Activated CD4-positive, alpha-beta T cell treated with anti-CD3 and anti-CD28 coated beads for 36 hours (primary cell): ENCODE measurements at regions of chr11 and their contacts with region 1.

Region 1: GRCh38 chr11:81787584-81788049 is 946.0 kb downstream of the FAM181B start:
- DNase-seq: peak; percentile 13
- ATAC-seq: peak; percentile 94
- H3K4me3 Mint-ChIP-seq: no peak overlapping the region
- H3K27ac Mint-ChIP-seq: no peak overlapping the region
- H3K4me1 Mint-ChIP-seq: peaks cover 19% of the 10 kb centered on the region
- H3K27me3 Mint-ChIP-seq: no peaks in the 10 kb centered on the region

Region 2: DNA sequence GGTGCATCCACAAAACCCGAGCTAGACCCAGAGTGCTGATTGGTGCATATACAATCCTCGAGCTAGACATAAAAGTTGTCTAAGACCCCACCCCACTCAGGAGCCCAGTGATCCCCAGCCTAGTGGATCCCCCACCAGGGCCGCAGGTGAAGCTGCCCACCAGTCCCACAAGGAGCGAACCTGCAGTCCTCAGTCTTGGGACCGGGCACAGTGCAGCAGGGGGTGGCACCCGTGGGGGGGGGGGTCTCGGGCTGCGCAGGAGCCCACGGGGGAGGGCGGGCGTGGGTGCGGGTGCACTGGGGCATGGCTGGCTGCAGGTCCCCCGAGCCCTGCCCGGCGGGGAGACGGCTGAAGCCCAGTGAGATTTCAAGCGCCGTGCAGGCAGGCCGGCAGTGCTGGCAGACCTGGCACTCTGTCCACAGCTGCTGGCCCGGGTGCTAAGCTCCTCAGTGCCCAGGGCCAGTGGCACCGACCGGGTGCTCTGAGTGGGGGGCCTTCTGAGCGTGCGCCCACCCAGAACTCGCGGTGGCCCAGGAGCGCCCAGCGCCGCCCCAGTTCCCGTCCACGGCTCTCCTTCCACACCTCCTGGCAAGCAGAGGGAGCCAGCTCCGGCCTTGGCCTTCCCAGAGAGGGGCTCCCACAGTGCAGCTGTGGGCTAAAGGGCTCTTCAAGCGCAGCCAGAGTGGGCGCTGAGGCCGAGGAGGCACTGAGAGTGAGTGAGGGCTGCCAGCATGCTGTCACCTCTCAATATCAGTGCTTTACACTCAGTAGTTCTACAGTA is 43.1 kb before region 1 on chr11:
- CTCF ChIA-PET with region 1: no interaction called
- POLR2A ChIA-PET with region 1: no interaction called
- intact Hi-C with region 1: no loop called
- DNase-seq: no peak
- ATAC-seq: no peak
- H3K4me3 Mint-ChIP-seq: no peak overlapping the region
- H3K27ac Mint-ChIP-seq: no peak overlapping the region
- H3K4me1 Mint-ChIP-seq: peaks cover 2% of the 10 kb centered on the region
- H3K27me3 Mint-ChIP-seq: peaks cover 1% of the 10 kb centered on the region

Region 3: DNA sequence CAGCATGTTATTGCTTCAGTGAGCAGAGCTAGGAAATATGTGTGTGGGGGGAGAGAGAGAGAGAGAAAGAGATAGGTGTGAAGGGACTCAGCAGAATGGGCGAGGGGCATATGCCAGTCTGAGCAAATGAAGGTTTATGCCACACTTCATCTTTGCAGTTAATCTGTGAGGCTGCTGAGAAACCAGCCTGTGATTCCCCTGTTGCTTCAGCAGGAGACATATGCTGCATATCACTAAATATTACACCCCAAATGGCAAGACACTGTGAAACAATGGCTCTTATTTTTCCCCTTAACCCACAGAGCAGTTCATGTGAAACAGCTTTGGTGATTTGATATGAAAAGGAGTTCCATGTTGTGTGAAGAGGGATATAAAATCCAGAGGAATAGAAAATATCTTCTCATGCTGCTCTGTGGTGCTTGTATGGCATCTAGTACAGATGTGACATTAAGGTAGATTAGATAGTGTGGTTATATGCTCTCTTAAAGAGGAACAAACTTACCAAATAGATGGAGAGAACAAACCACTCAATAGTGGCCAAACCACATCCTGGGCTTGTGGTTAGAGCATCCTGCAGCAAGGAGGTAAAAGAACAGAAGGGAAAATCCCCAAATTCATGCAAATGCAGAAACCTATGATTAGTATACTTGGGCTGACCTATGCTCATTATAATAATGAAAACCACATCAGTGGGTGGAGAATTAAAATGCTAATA is 81.9 kb after region 1 on chr11:
- CTCF ChIA-PET with region 1: no interaction called
- POLR2A ChIA-PET with region 1: no interaction called
- intact Hi-C with region 1: loop called (anchors 1 kb)
- DNase-seq: peak; percentile 95
- ATAC-seq: peak; percentile 85
- H3K4me3 Mint-ChIP-seq: peak overlapping the region; percentile 56
- H3K27ac Mint-ChIP-seq: peak overlapping the region; percentile 72
- H3K4me1 Mint-ChIP-seq: peaks cover 44% of the 10 kb centered on the region
- H3K27me3 Mint-ChIP-seq: no peaks in the 10 kb centered on the region

Region 4: DNA sequence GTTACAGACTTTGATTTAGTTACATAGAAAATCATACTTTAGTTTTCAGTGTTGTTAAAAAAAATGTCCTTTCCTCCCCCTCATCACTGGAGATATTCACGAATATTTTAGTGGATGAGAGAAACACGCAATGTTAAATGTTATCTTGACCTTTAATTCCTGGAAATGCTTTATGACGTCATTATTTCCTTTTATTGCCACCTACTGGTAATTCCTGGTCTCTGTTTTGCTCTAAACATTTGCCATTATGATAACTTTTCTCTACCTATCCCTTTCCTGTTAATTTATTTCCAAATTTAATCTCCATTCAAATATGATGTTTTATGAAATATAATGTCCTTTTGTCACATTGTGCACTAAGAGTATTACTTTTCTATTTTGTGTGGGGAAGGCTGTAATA is 175.4 kb after region 1 on chr11:
- CTCF ChIA-PET with region 1: interaction called, 3 read pairs
- POLR2A ChIA-PET with region 1: no interaction called
- intact Hi-C with region 1: loop called (anchors 1 kb)
- DNase-seq: no peak
- ATAC-seq: peak; percentile 39
- H3K4me3 Mint-ChIP-seq: no peak overlapping the region
- H3K27ac Mint-ChIP-seq: peak overlapping the region; percentile 10
- H3K4me1 Mint-ChIP-seq: peaks cover 26% of the 10 kb centered on the region
- H3K27me3 Mint-ChIP-seq: no peaks in the 10 kb centered on the region

Region 5: GRCh38 chr11:82003671-82004515 is 216.3 kb after region 1 on chr11:
- CTCF ChIA-PET with region 1: no interaction called
- POLR2A ChIA-PET with region 1: no interaction called
- intact Hi-C with region 1: loop called (anchors 2 to 5 kb)
- DNase-seq: peak; percentile 35
- ATAC-seq: peak; percentile 47
- H3K4me3 Mint-ChIP-seq: no peak overlapping the region
- H3K27ac Mint-ChIP-seq: peak overlapping the region; percentile 64
- H3K4me1 Mint-ChIP-seq: peaks cover 22% of the 10 kb centered on the region
- H3K27me3 Mint-ChIP-seq: no peaks in the 10 kb centered on the region

Region 6: GRCh38 chr11:82038153-82038552 is 250.5 kb after region 1 on chr11:
- CTCF ChIA-PET with region 1: no interaction called
- POLR2A ChIA-PET with region 1: no interaction called
- intact Hi-C with region 1: loop called in 1 of 2 experiments (anchors 5 kb)
- DNase-seq: no peak
- ATAC-seq: no peak
- H3K4me3 Mint-ChIP-seq: no peak overlapping the region
- H3K27ac Mint-ChIP-seq: no peak overlapping the region
- H3K4me1 Mint-ChIP-seq: no peaks in the 10 kb centered on the region
- H3K27me3 Mint-ChIP-seq: no peaks in the 10 kb centered on the region

Region 7: GRCh38 chr11:82229341-82229740 is 441.7 kb after region 1 on chr11:
- CTCF ChIA-PET with region 1: no interaction called
- POLR2A ChIA-PET with region 1: no interaction called
- intact Hi-C with region 1: loop called (anchors 1 to 2 kb)
- DNase-seq: no peak
- ATAC-seq: no peak
- H3K4me3 Mint-ChIP-seq: no peak overlapping the region
- H3K27ac Mint-ChIP-seq: no peak overlapping the region
- H3K4me1 Mint-ChIP-seq: no peaks in the 10 kb centered on the region
- H3K27me3 Mint-ChIP-seq: no peaks in the 10 kb centered on the region

Region 8: GRCh38 chr11:82384308-82384707 is 596.7 kb after region 1 on chr11:
- CTCF ChIA-PET with region 1: no interaction called
- POLR2A ChIA-PET with region 1: no interaction called
- intact Hi-C with region 1: no loop called
- DNase-seq: no peak
- ATAC-seq: no peak
- H3K4me3 Mint-ChIP-seq: no peak overlapping the region
- H3K27ac Mint-ChIP-seq: no peak overlapping the region
- H3K4me1 Mint-ChIP-seq: no peaks in the 10 kb centered on the region
- H3K27me3 Mint-ChIP-seq: no peaks in the 10 kb centered on the region